PC-9 (cell line): ENCODE measurements at regions of chr11 and their contacts with region 1.

Region 1: GRCh38 chr11:83019888-83020579 is 51.7 kb downstream of the RAB30 start:
- DNase-seq: no peak
- H3K4me3 ChIP-seq: no peak overlapping the region
- H3K27ac ChIP-seq: no peak overlapping the region
- H3K4me1 ChIP-seq: peaks cover 10% of the 10 kb centered on the region
- H3K27me3 ChIP-seq: no peaks in the 10 kb centered on the region
- CTCF ChIP-seq: no peak

Region 2: DNA sequence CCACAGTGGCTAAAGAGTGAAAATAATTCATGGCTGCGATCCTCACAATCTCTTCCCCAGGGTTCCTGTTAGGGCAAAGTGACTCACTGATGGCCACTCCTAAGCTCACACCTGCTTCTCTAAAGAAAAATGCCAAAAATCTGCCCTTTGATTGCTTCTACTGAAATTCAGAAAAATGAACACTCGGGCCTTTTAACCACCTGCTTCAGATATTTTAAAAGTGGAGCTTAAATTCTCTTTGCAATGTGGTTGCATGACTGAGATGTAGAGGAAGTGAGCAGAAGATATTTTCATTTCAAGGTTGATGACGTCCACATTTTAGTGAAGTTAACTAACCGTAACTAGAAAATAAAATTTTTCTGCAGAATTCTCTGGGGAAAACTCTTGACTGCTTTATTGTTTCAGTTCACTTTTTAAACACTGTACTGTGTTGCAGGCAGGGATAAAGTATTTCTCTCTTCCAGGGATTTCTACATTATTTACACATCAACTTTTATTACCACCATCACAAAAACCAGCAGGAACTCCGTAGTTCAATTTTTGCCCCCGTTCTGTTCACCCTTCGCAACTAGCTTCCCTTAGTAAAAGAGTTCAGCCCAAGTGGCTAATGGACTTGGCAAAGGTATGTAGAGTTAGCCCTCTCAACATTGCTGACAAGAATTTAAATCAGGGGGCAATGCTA is 43.2 kb after region 1 on chr11:
- CTCF ChIA-PET with region 1: no interaction called
- POLR2A ChIA-PET with region 1: interaction called, 13 read pairs
- intact Hi-C with region 1: no loop called
- DNase-seq: peak in 1 of 2 experiments; percentile 64
- H3K4me3 ChIP-seq: no peak overlapping the region
- H3K27ac ChIP-seq: no peak overlapping the region
- H3K4me1 ChIP-seq: peaks cover 14% of the 10 kb centered on the region
- H3K27me3 ChIP-seq: no peaks in the 10 kb centered on the region
- CTCF ChIP-seq: no peak

Region 3: GRCh38 chr11:83249972-83250593 is 230.0 kb after region 1 on chr11:
- CTCF ChIA-PET with region 1: no interaction called
- POLR2A ChIA-PET with region 1: no interaction called
- intact Hi-C with region 1: no loop called
- DNase-seq: peak in 1 of 2 experiments; percentile 59
- H3K4me3 ChIP-seq: no peak overlapping the region
- H3K27ac ChIP-seq: no peak overlapping the region
- H3K4me1 ChIP-seq: peaks cover 1% of the 10 kb centered on the region
- H3K27me3 ChIP-seq: no peaks in the 10 kb centered on the region
- CTCF ChIP-seq: peak; percentile 83

Region 4: GRCh38 chr11:83349296-83349695 is 329.3 kb after region 1 on chr11:
- CTCF ChIA-PET with region 1: no interaction called
- POLR2A ChIA-PET with region 1: no interaction called
- intact Hi-C with region 1: no loop called
- DNase-seq: no peak
- H3K4me3 ChIP-seq: no peak overlapping the region
- H3K27ac ChIP-seq: no peak overlapping the region
- H3K4me1 ChIP-seq: no peaks in the 10 kb centered on the region
- H3K27me3 ChIP-seq: 0 out of 2 replicates have a peak, but pooled peaks cover 6% of the 10 kb centered on the region
- CTCF ChIP-seq: no peak

Region 5: GRCh38 chr11:84261707-84262106 is 1241.7 kb after region 1 on chr11:
- CTCF ChIA-PET with region 1: interaction called, 14 read pairs
- POLR2A ChIA-PET with region 1: no interaction called
- intact Hi-C with region 1: no loop called
- DNase-seq: no peak
- H3K4me3 ChIP-seq: no peak overlapping the region
- H3K27ac ChIP-seq: no peak overlapping the region
- H3K4me1 ChIP-seq: no peaks in the 10 kb centered on the region
- H3K27me3 ChIP-seq: no peaks in the 10 kb centered on the region
- CTCF ChIP-seq: peak; percentile 37; the same call in 1 of the 2 replicates